Activated naive CD4-positive, alpha-beta T cell treated with anti-CD3 and anti-CD28 coated beads for 36 hours (primary cell): ENCODE measurements at regions of chr7 and their contacts with region 1.

Region 1: DNA sequence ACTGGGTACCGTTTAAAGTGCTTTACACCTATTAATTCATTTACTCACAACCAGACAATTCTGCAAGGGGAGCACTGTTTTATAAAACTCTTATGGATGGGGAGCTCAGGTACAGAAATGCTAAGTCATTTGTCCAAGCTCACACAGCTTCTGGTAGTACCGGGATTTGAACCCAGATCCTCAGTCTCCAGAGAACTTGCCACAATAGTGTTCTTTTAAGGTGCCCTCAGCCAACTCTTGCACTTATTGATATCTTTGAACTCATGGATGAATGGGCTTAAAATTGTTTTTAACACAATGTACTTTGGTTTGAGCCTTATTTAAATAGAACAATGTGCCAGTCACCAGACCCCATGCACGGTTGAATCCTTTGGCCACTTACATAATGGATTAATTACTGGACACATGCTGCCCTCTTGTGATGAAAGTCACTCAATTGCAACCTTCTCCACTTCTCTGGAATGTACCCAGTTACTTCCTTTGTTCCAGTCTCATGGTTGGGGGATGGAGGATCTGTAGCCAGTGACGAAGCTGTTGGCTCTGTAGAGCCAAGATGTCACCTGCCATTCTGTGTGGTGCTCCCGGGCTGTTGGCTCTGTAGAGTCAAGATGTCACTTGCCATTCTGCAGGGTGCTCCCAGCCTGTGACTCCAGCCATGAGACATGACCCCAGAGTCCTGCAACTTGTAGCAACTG is 65.6 kb downstream of the NOD1 start:
- DNase-seq: peak; percentile 10
- H3K4me3 Mint-ChIP-seq: no peak overlapping the region
- H3K27ac Mint-ChIP-seq: no peak overlapping the region
- H3K4me1 Mint-ChIP-seq: no peaks in the 10 kb centered on the region
- H3K27me3 Mint-ChIP-seq: no peaks in the 10 kb centered on the region

Region 2: GRCh38 chr7:29878081-29878688 is 534.8 kb before region 1 on chr7:
- CTCF ChIA-PET with region 1: no interaction called
- intact Hi-C with region 1: loop called (anchors 5 kb)
- DNase-seq: peak; percentile 47
- H3K4me3 Mint-ChIP-seq: no peak overlapping the region
- H3K27ac Mint-ChIP-seq: no peak overlapping the region
- H3K4me1 Mint-ChIP-seq: peaks cover 6% of the 10 kb centered on the region
- H3K27me3 Mint-ChIP-seq: peaks cover 9% of the 10 kb centered on the region

Region 3: GRCh38 chr7:30276203-30276900 is 136.6 kb before region 1 on chr7:
- CTCF ChIA-PET with region 1: interaction called, 10 read pairs
- intact Hi-C with region 1: loop called (anchors 2 kb)
- DNase-seq: peak; percentile 75
- H3K4me3 Mint-ChIP-seq: no peak overlapping the region
- H3K27ac Mint-ChIP-seq: no peak overlapping the region
- H3K4me1 Mint-ChIP-seq: peaks cover 5% of the 10 kb centered on the region
- H3K27me3 Mint-ChIP-seq: no peaks in the 10 kb centered on the region